ENCODE measurements at regions of chr10 and their contacts with region 1.

Region 1: DNA sequence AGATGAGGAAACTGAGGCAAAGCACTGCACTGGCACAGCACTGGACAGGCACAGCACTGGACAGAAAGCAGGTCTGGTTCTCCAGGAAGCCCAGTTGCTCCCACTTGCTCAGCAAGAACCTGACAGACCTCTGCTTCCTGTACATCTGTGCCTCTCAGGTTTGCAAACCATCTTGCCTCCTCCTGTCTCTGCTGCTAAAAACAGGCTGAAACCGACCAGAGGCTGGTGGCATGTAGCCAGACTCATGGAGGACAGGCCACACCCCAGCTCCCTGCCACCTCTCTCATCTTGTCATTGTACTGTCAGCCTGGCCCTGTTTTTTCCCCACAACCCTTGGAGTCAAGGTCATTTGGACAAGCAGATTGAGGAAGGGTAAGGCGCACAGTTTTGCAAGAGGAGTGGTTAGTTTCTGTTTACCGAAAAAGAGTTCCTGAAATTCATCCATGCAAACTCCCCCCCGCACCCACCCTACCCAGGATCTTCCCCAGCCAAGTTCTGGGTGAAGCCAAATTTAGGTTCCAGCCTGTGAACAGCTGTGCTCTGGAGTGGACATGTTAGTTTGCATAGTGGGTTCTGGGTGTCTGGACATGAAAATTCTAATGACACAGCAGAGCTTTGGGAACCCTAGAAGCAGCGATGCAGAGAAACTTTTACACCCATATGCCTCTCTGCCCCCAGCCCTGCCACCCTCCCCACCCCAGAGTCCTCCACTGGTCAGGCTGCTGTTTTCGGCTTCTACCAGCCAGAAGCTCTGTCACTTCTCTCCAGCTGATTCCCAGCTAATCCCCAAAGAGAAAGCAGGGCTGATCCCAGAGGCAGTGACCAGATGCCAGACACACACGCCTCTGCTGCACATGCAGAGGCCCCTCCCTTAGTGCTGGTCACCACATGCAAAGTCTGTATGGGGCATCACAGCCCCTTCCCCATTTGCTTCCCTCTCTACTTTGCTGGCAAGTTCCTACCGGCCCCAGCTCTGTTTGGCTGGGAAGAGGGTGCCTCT is 8.5 kb upstream of the C10orf105 start:
- DNase-seq: peak; percentile 86
- ATAC-seq: peak; percentile 57
- H3K4me3 Mint-ChIP-seq: peak overlapping the region; percentile 11
- H3K27ac Mint-ChIP-seq: peak overlapping the region; percentile 96
- H3K4me1 Mint-ChIP-seq: peaks cover 85% of the 10 kb centered on the region
- H3K27me3 Mint-ChIP-seq: no peaks in the 10 kb centered on the region

Region 2: DNA sequence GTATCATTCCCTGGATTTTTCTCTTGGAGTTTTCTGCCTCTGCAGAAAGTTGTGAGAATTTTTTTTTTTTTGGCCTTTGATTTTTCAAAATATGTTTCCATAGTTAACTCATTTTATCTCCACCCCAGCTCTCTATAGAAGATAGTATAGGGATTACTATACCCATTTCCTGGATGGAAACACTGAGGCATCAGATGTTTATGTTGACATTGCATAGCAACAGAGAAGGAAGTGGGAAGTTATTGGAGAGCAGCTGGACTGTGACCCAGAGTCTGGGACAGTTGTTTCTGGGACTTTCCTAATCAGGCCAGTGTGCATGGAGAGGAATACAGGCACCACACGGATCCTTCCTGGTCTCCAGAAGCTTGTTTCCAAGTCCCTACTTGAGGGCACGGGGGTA is 173.4 kb before region 1 on chr10:
- CTCF ChIA-PET with region 1: no interaction called
- DNase-seq: no peak
- ATAC-seq: no peak
- H3K4me3 Mint-ChIP-seq: no peak overlapping the region
- H3K27ac Mint-ChIP-seq: no peak overlapping the region
- H3K4me1 Mint-ChIP-seq: no peaks in the 10 kb centered on the region
- H3K27me3 Mint-ChIP-seq: peaks cover 18% of the 10 kb centered on the region

Region 3: DNA sequence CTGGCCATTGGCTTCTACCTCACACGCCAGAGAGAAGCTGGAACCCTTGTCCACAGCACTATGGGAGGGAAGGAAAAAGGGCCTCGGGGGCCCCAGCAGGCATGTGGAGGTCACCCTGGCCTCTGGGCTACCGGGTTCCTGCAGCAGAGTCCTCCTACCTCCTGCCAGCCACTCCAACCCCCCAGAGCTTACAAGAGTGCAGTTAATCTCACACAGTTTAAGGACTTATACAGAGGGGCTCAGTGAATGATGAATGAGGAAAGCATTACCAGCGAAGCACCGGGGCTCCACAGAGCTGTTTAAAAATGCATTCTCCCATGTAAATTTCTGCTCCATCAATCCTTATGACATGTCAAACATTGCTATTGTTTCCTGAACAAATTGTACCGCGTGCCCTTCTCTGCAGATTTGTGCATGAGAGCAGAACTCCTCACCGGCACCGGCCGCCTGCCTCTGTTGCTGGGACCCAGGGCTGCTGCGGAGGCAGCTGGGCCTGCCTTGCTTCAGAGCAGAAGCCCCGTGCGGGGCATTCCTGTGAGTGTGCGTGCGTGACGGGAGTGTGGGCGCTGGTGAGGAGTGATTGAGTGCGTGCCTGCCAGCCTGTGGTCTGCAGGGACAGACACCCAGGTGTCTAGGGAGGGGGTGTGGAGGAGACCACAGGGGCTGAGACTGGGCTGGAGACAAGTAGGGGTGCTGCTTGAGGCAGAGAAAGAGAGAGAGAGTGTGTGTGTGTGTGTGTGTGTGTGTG is 61.2 kb before region 1 on chr10:
- CTCF ChIA-PET with region 1: no interaction called
- DNase-seq: no peak
- ATAC-seq: no peak
- H3K4me3 Mint-ChIP-seq: no peak overlapping the region
- H3K27ac Mint-ChIP-seq: no peak overlapping the region
- H3K4me1 Mint-ChIP-seq: peaks cover 8% of the 10 kb centered on the region
- H3K27me3 Mint-ChIP-seq: peaks cover 2% of the 10 kb centered on the region

Region 4: GRCh38 chr10:71713135-71714030 is 14.7 kb before region 1 on chr10:
- CTCF ChIA-PET with region 1: interaction called, 42 read pairs
- DNase-seq: peak; percentile 63
- ATAC-seq: peak; percentile 79
- H3K4me3 Mint-ChIP-seq: peak overlapping the region; percentile 60
- H3K27ac Mint-ChIP-seq: peak overlapping the region; percentile 98
- H3K4me1 Mint-ChIP-seq: peaks cover 36% of the 10 kb centered on the region
- H3K27me3 Mint-ChIP-seq: no peaks in the 10 kb centered on the region

Region 5: GRCh38 chr10:71748671-71749191 is 20.7 kb after region 1 on chr10:
- CTCF ChIA-PET with region 1: interaction called, 40 read pairs
- DNase-seq: peak; percentile 95
- ATAC-seq: peak; percentile 85
- H3K4me3 Mint-ChIP-seq: peak overlapping the region; percentile 56
- H3K27ac Mint-ChIP-seq: peak overlapping the region; percentile 97
- H3K4me1 Mint-ChIP-seq: peaks cover 94% of the 10 kb centered on the region
- H3K27me3 Mint-ChIP-seq: no peaks in the 10 kb centered on the region

Region 6: DNA sequence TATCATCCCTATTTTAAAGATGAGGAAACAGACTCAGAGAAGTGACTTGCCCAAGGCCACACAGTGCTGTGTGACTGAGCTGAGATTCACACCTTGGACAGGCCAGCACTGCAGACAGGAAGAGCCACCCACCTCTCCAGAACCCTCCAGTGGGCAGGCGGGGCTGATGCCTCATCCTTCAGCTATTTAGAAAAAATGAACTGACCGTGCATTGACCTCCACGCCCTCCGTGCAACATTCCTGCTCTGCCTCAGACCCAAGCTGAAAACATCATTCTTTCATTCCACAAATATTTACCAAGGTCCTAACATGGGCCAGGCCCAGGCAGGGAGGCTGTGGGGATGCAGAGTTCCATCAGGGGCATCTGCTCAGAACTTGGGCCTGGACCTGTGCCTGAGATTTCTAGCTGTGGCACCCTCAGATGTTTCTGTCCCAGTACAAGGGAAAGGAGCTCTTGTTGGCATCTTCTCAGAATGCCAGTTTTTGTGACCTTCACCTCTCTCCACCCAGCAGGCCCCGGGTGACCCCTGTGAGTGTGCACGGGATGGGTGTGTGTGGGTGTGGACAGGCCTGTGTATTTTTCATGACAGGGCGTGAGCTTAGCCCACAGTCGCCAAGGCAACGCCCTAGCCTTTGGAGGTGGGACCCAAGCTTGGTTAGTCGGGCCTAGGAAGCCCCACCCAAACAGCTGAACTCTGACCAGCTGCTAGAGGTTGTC is 38.8 kb after region 1 on chr10:
- CTCF ChIA-PET with region 1: interaction called, 55 read pairs
- DNase-seq: peak; percentile 70
- ATAC-seq: no peak
- H3K4me3 Mint-ChIP-seq: no peak overlapping the region
- H3K27ac Mint-ChIP-seq: peak overlapping the region; percentile 90
- H3K4me1 Mint-ChIP-seq: peaks cover 61% of the 10 kb centered on the region
- H3K27me3 Mint-ChIP-seq: no peaks in the 10 kb centered on the region

Region 7: DNA sequence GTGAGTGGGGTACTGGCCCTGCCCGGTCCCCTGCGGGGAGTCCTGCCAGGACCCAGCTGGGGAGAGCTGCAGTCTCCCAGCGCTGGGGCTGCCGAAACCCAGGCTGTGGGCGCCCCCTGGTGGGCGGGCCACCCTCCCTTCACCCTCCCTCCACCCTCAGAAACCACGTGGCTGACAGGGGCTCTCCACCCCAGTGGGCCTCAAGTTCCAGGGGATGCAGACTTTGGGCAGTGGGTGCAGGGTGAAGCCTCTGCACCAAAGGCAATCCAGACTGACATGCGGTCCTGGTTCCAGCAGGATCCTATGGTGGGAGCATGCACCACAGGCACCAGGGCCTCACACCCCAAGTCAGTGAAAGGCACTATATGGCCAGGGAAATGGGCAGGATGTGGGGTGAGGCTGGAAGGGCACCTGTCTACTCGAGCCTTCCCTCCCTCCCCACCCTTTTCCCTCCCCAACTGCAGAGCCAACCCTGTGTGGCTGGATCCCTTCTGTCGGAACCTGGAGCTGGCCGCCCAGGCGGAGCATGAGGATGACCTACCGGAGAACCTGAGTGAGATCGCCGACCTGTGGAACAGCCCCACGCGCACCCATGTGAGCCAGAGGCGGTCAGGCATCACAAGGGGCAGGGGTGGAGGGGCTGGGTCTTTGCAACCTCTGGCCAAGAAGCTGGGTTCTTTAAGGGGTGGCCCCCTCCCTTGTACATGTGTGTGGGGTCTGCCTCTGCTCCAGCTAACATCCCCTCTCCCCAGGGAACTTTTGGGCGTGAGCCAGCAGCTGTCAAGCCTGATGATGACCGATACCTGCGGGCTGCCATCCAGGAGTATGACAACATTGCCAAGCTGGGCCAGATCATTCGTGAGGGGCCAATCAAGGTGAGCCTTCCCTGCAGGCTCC is 84.2 kb after region 1 on chr10:
- CTCF ChIA-PET with region 1: interaction called, 12 read pairs
- DNase-seq: peak; percentile 82
- ATAC-seq: peak; percentile 96
- H3K4me3 Mint-ChIP-seq: no peak overlapping the region
- H3K27ac Mint-ChIP-seq: no peak overlapping the region
- H3K4me1 Mint-ChIP-seq: peaks cover 5% of the 10 kb centered on the region
- H3K27me3 Mint-ChIP-seq: no peaks in the 10 kb centered on the region

Measured in activated CD8-positive, alpha-beta memory T cell treated with anti-CD3 and anti-CD28 coated beads, Interleukin-2, amount 10 ng/mL, durations not matched to agents 7 days and 5 days (primary cell).